ENCODE measurements at regions of chr3 and their contacts with region 1.

Region 1: GRCh38 chr3:121545574-121546455 is at the start of gene POLQ:
- DNase-seq: peak; percentile 85
- H3K4me3 ChIP-seq: peak within 1 kb of the TSS; percentile 82
- H3K27ac ChIP-seq: no peak within 1 kb of the TSS
- H3K27me3 ChIP-seq: no peaks in the 10 kb centered on the region
- CTCF ChIP-seq: no peak
- polyA plus RNA-seq, gene POLQ: 0.96 and 1.4 TPM in 2 replicates

Region 2: DNA sequence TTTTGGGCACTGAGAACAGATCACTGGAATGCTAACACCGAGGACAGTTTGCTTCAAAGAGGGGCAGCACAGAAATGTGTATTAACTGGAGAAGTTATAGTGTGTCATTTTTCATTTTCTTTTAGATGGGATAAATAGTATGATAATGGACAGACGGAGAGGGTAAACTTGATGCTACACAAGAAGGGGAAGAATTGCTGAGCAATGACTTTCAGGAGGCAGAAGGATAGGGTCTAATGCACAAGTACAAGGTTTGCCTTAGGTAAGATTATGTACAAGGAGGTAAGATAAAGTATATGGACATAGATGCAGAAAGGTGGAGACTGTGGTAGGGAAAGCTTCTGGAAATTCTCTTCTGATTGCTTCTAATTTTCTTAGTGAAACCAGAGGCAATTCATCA is 1164.3 kb before region 1 on chr3:
- CTCF ChIA-PET with region 1: no interaction called
- POLR2A ChIA-PET with region 1: no interaction called
- DNase-seq: no peak
- H3K4me3 ChIP-seq: no peak overlapping the region
- H3K27ac ChIP-seq: no peak overlapping the region
- H3K27me3 ChIP-seq: peaks cover 3% of the 10 kb centered on the region
- CTCF ChIP-seq: no peak

Region 3: GRCh38 chr3:121529308-121529707 is 16.5 kb before region 1 on chr3:
- CTCF ChIA-PET with region 1: interaction called, 11 read pairs
- POLR2A ChIA-PET with region 1: no interaction called
- DNase-seq: no peak
- H3K4me3 ChIP-seq: no peak overlapping the region
- H3K27ac ChIP-seq: no peak overlapping the region
- H3K27me3 ChIP-seq: no peaks in the 10 kb centered on the region
- CTCF ChIP-seq: peak; percentile 66

Region 4: GRCh38 chr3:121995161-121996137 is 449.6 kb after region 1 on chr3:
- CTCF ChIA-PET with region 1: interaction called, 19 read pairs
- POLR2A ChIA-PET with region 1: no interaction called
- DNase-seq: peak; percentile 11
- H3K4me3 ChIP-seq: no peak overlapping the region
- H3K27ac ChIP-seq: peak overlapping the region; percentile 75
- H3K27me3 ChIP-seq: no peaks in the 10 kb centered on the region
- CTCF ChIP-seq: peak; percentile 56

Region 5: GRCh38 chr3:122258757-122259371 is 713.0 kb after region 1 on chr3:
- CTCF ChIA-PET with region 1: interaction called, 41 read pairs
- POLR2A ChIA-PET with region 1: no interaction called
- DNase-seq: peak; percentile 7
- H3K4me3 ChIP-seq: no peak overlapping the region
- H3K27ac ChIP-seq: no peak overlapping the region
- H3K27me3 ChIP-seq: peaks cover 7% of the 10 kb centered on the region
- CTCF ChIP-seq: peak; percentile 61

Region 6: DNA sequence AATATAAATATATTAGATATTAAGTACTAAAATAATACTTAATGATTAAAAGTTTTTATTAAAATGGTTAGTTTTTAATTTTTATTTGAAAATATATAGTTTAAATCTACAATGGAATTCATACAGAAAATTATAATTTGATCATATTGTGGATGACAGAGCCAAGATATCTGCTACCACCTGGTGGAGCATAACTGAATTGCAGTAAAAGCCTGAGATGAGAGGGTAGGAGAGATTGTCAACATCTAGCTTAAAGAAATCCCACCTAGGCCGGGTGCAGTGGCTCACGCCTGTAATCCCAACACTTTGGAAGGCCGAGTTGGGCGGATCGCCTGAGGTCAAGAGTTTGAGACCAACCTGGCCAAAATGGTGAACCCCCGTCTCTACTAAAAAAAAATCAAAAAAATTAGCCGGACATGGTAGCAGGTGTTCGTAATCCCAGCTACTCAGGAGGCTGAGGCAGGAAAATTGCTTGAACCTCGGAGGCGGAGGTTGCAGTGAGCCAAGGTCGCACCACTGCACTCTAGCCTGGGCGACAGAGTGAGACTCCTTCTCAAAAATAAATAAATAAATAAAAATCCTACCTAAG is 754.2 kb after region 1 on chr3:
- CTCF ChIA-PET with region 1: interaction called, 21 read pairs
- POLR2A ChIA-PET with region 1: no interaction called
- DNase-seq: no peak
- H3K4me3 ChIP-seq: no peak overlapping the region
- H3K27ac ChIP-seq: no peak overlapping the region
- H3K27me3 ChIP-seq: no peaks in the 10 kb centered on the region
- CTCF ChIP-seq: peak; percentile 60